ENCODE measurements at regions of chr11 and their contacts with region 1.

Region 1: DNA sequence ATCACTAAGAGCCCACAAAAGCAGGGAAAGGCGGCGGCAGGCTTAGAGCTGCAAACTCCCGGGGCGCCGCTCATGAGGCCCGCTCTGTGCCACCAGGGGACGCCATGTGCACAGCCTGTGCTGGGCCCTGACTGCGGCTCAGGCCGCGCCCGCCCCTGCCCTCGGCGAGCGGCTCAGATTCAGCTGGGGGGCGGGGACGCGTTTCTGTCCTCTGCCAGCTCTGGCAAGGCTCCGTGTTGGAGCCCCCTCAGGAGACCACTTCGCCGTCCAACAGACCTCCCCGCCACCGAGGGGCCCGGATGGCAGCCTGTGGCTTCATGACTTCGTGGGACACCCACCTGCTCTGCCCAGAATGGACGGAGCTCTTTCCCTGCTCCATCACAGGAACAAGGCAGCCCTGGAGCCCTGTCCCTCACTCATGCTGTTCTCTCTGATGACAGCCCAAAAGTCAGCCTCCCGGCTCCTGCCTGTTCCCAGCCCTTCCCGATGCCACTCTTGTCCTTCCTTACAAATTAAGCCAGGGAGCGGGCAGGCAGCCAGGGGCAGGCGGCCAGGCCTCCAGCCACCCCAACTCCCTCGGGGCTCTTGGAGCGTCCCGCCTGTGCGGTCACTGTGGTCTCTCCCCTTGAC is 69.1 kb downstream of the NAT10 start:
- DNase-seq: no peak
- H3K4me3 ChIP-seq: peak overlapping the region; percentile 49
- H3K27ac ChIP-seq: no peak overlapping the region
- H3K27me3 ChIP-seq: peaks cover 5% of the 10 kb centered on the region
- CTCF ChIP-seq: peak; percentile 97

Region 2: GRCh38 chr11:33996498-33997454 is 177.8 kb before region 1 on chr11:
- CTCF ChIA-PET with region 1: interaction called, 15 read pairs
- POLR2A ChIA-PET with region 1: no interaction called
- DNase-seq: peak; percentile 32
- H3K4me3 ChIP-seq: no peak overlapping the region
- H3K27ac ChIP-seq: no peak overlapping the region
- H3K27me3 ChIP-seq: peaks cover 20% of the 10 kb centered on the region
- CTCF ChIP-seq: peak; percentile 83

Region 3: GRCh38 chr11:34185926-34186841 is 11.7 kb after region 1 on chr11:
- CTCF ChIA-PET with region 1: interaction called, 18 read pairs
- POLR2A ChIA-PET with region 1: no interaction called
- DNase-seq: no peak
- H3K4me3 ChIP-seq: no peak overlapping the region
- H3K27ac ChIP-seq: no peak overlapping the region
- H3K27me3 ChIP-seq: peaks cover 7% of the 10 kb centered on the region
- CTCF ChIP-seq: no peak

Region 4: DNA sequence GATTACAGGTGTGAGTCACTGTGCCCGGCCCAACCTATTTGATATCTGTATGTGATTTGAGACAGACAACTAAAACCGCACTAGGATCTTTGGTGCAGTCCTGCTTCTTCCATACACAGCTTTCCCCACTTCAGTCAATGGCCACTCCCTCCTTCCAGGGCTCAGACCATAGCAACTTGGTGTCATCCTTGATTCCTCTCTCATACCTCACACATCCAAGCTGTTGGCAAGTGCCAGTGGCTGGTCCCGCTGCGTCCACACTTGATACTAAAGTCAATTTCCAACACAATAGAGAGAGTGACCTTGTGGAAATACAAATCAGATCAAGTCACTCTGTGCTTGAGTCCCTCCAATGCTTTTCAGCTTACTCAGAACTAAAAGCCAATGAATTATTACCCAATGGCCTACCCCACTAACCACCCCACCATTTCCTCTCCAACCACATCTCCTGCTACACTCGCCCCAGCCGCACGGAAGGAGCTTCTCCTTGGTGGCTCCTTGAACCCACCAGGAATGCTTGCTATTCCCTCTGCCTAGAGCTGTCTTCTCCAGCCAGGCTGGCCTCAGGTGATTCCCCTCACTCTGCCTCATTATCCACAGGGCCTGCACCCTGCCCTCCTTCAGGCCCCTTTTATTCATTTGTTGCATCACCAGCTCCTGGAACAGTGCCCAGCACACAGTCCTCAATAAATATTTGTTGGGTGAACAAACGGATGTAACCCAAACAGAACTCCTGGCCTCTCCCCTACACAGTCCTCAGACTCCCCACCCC is 170.4 kb after region 1 on chr11:
- CTCF ChIA-PET with region 1: interaction called, 30 read pairs
- POLR2A ChIA-PET with region 1: no interaction called
- DNase-seq: no peak
- H3K4me3 ChIP-seq: no peak overlapping the region
- H3K27ac ChIP-seq: no peak overlapping the region
- H3K27me3 ChIP-seq: peaks cover 9% of the 10 kb centered on the region
- CTCF ChIP-seq: no peak

Region 5: DNA sequence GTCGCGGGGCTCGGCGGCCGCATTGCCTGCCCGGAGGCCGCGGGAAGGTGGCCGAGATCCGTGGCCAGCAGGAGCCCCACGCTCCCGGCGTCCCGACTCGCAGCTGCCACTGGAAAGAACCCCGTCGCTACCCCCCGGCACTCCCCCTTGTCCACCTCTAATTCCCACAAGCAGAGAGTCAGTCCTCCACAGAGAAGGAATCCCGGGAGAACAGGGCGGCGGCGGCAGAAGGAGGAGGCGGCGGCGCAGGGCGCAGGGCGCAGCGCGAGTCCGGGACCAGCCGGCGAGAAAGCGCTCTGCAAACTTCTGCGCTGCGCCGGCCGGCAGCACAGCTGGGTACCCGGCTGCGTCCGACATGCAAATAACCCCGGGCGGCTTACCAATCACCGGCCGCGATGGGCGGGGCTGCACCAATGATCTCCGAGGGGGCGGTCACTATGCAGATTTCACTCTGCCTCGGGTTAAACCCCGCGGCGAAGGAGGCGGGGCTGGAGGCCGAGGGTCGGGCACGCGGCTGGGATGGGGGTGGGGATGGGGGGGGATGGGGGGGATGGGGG is 183.3 kb after region 1 on chr11 and contains the start of gene ABTB2:
- CTCF ChIA-PET with region 1: interaction called, 77 read pairs
- POLR2A ChIA-PET with region 1: interaction called, 17 read pairs
- DNase-seq: peak; percentile 91
- H3K4me3 ChIP-seq: peak within 1 kb of the TSS; percentile 63
- H3K27ac ChIP-seq: no peak within 1 kb of the TSS
- H3K27me3 ChIP-seq: peaks cover 25% of the 10 kb centered on the region
- CTCF ChIP-seq: no peak
- polyA plus RNA-seq, gene ABTB2: 0.43 and 0.58 TPM in 2 replicates

Region 6: GRCh38 chr11:34492806-34493414 is 318.4 kb after region 1 on chr11:
- CTCF ChIA-PET with region 1: interaction called, 13 read pairs
- POLR2A ChIA-PET with region 1: no interaction called
- DNase-seq: no peak
- H3K4me3 ChIP-seq: no peak overlapping the region
- H3K27ac ChIP-seq: no peak overlapping the region
- H3K27me3 ChIP-seq: peaks cover 33% of the 10 kb centered on the region
- CTCF ChIP-seq: peak; percentile 54